Right ventricle myocardium superior (tissue), 1 donor: ENCODE measurements at regions of chr2 and their contacts with region 1.

Region 1: GRCh38 chr2:191555092-191555742 is 122.7 kb upstream of the NABP1 start:
- DNase-seq: peak; percentile 82
- ATAC-seq: peak; percentile 96

Region 2: GRCh38 chr2:191465766-191466420 is 89.3 kb before region 1 on chr2:
- intact Hi-C with region 1: no loop called
- DNase-seq: no peak
- ATAC-seq: peak; percentile 55

Region 3: DNA sequence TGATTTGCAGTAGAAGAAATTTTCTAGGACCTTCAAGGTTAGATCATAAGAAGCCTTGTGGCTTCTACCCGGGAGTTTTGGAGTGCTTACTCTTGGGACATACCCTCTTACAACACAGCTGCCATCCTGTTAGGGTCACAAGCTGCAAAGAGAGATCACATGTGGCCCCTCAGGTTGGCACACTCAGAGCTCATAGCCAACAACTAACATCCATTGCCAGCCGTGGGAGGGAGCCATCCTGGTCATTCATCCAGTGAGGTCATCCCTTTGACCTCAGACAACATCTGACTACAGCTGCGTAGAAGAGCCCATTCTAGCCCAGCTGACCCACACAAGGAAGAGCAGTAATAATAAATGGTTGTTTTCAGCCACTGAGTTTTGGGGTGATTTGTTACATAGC is 45.8 kb after region 1 on chr2:
- intact Hi-C with region 1: no loop called
- DNase-seq: no peak
- ATAC-seq: no peak

Region 4: GRCh38 chr2:191777351-191777750 is 222.1 kb after region 1 on chr2:
- intact Hi-C with region 1: no loop called
- DNase-seq: no peak
- ATAC-seq: no peak

Region 5: GRCh38 chr2:192162392-192163042 is 607.3 kb after region 1 on chr2:
- intact Hi-C with region 1: loop called (anchors 10 kb)
- DNase-seq: no peak
- ATAC-seq: peak; percentile 90